AG04450 (cell line): ENCODE measurements at regions of chr7 and their contacts with region 1.

Region 1: GRCh38 chr7:108224387-108224786 is 94.2 kb upstream of the LAMB4 start:
- DNase-seq: no peak
- H3K4me3 ChIP-seq: no peak overlapping the region
- H3K27ac ChIP-seq: no peak overlapping the region
- H3K27me3 ChIP-seq: no peaks in the 10 kb centered on the region
- CTCF ChIP-seq: no peak

Region 2: DNA sequence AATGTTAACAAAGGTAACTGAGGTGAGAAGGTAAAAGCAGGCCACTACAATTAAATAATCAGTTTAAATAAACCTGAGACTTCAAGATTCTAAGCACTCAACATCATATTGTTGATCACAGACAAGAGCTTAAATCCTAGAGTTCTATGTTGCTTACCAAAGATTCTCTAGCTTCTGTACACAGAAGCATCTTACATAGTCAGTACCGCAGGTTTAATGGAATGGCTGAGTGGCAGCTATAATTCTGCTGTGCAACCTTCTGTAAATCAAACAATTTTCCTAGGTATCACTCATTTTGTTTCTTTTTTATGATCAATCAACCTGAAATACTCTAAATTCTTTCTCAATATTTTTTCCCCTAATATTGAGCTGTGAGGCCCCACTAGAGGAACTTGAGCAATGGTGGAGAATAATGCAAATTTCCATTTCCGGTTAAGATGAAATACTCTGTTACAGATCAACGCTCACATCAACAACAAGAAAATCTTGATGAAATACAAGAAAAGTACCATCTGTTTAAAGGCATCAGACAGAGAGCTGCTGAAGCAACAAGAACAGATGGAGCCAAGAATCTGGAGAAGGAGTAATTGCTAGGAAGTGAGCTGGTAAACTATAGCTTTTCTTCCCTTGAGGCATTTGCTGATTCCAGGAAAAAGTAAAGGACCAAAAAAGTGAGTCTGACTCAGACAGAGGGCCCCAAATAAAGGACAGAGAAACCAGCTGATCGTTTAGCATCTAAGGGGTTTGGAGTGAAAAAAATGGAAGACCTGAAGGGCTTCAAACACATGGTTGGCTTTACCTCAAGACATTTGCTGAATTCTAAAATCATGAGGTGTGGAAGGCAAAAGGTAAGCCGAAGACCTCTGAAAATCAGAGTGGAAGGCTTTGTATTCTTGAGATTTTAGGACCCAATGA is 279.0 kb after region 1 on chr7:
- CTCF ChIA-PET with region 1: interaction called, 10 read pairs
- POLR2A ChIA-PET with region 1: no interaction called
- DNase-seq: peak; percentile 13
- H3K4me3 ChIP-seq: no peak overlapping the region
- H3K27ac ChIP-seq: peak overlapping the region; percentile 66
- H3K27me3 ChIP-seq: no peaks in the 10 kb centered on the region
- CTCF ChIP-seq: no peak